ENCODE measurements at regions of chr6 and their contacts with region 1.

Region 1: GRCh38 chr6:46848684-46849360 is 55.6 kb downstream of the MEP1A start:
- DNase-seq: peak; percentile 87 to 96 (median 94)
- ATAC-seq: peak; percentile 96
- H3K4me3 ChIP-seq: no peak overlapping the region
- H3K27ac ChIP-seq: no peak overlapping the region
- H3K4me1 ChIP-seq: peaks cover 4% of the 10 kb centered on the region
- H3K27me3 ChIP-seq: no peaks in the 10 kb centered on the region

Region 2: DNA sequence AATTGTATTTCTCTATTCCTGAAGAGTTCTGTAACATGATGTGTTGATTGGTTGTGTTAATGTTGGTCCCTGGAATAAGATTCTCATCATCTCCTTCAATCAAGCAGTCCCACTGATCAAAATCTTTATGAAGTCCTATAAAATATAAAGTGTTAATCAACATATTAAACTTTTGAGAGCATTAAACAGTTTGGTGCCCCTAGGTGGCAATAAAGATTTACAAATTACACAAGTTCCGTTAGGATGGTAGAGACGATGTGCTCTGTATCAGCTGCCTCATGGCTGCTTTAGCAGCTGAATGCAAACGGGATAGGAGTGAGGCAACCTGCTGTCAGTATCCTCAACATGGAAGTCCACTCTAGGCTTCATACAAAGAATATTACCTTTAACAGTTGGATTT is 144.3 kb before region 1 on chr6:
- intact Hi-C with region 1: no loop called
- DNase-seq: no peak
- ATAC-seq: peak in 1 of 2 donors; percentile 64
- H3K4me3 ChIP-seq: no peak overlapping the region
- H3K27ac ChIP-seq: no peak overlapping the region
- H3K4me1 ChIP-seq: no peaks in the 10 kb centered on the region
- H3K27me3 ChIP-seq: no peaks in the 10 kb centered on the region

Region 3: GRCh38 chr6:46983007-46983411 is 134.2 kb after region 1 on chr6:
- intact Hi-C with region 1: loop called in 2 of 4 experiments (anchors 5 to 10 kb)
- DNase-seq: no peak
- ATAC-seq: no peak
- H3K4me3 ChIP-seq: no peak overlapping the region
- H3K27ac ChIP-seq: no peak overlapping the region
- H3K4me1 ChIP-seq: no peaks in the 10 kb centered on the region
- H3K27me3 ChIP-seq: no peaks in the 10 kb centered on the region

Region 4: GRCh38 chr6:46993846-46994245 is 145.0 kb after region 1 on chr6:
- intact Hi-C with region 1: loop called (anchors 2 to 10 kb)
- DNase-seq: no peak
- ATAC-seq: no peak
- H3K4me3 ChIP-seq: no peak overlapping the region
- H3K27ac ChIP-seq: no peak overlapping the region
- H3K4me1 ChIP-seq: no peaks in the 10 kb centered on the region
- H3K27me3 ChIP-seq: peaks cover 2% of the 10 kb centered on the region

Region 5: GRCh38 chr6:47047479-47048407 is 198.9 kb after region 1 on chr6:
- intact Hi-C with region 1: loop called (anchors 2 to 5 kb)
- DNase-seq: peak in 1 of 3 donors; percentile 14
- ATAC-seq: peak; percentile 78 to 87
- H3K4me3 ChIP-seq: no peak overlapping the region
- H3K27ac ChIP-seq: no peak overlapping the region
- H3K4me1 ChIP-seq: no peaks in the 10 kb centered on the region
- H3K27me3 ChIP-seq: no peaks in the 10 kb centered on the region

Region 6: GRCh38 chr6:47680051-47680450 is 831.2 kb after region 1 on chr6:
- intact Hi-C with region 1: no loop called
- DNase-seq: no peak
- ATAC-seq: no peak
- H3K4me3 ChIP-seq: no peak overlapping the region
- H3K27ac ChIP-seq: no peak overlapping the region
- H3K4me1 ChIP-seq: no peaks in the 10 kb centered on the region
- H3K27me3 ChIP-seq: no peaks in the 10 kb centered on the region

Measured in right cardiac atrium (tissue), 5 donors.